ENCODE measurements at regions of chr19 and their contacts with region 1.

Region 1: GRCh38 chr19:50329146-50329925 is at the start of gene KCNC3:
- DNase-seq: peak; percentile 98 to 99
- ATAC-seq: peak; percentile 79 to 91 (median 86)
- H3K4me3 ChIP-seq: peak within 1 kb of the TSS; percentile 18 to 53 (median 48)
- H3K27ac ChIP-seq: peak within 1 kb of the TSS in 9 of 10 donors; percentile 16 to 83 (median 72)
- H3K4me1 ChIP-seq: peaks cover 5 to 62% (median 27%) of the 10 kb centered on the region in 9 donors
- H3K27me3 ChIP-seq: peaks cover 0 to 86% (median 64%) of the 10 kb centered on the region in 7 donors
- CTCF ChIP-seq: no peak
- total RNA-seq, gene KCNC3: 1.4 to 4.0 (median 2.4) TPM

Region 2: GRCh38 chr19:50167314-50167721 is 162.0 kb before region 1 on chr19:
- intact Hi-C with region 1: loop called in 1 of 10 experiments (anchors 5 kb)
- DNase-seq: no peak
- ATAC-seq: no peak
- H3K4me3 ChIP-seq: no peak overlapping the region
- H3K27ac ChIP-seq: no peak overlapping the region
- H3K4me1 ChIP-seq: peaks cover 0 to 4% (median 0%) of the 10 kb centered on the region in 9 donors
- H3K27me3 ChIP-seq: peaks cover 0 to 42% (median 15%) of the 10 kb centered on the region in 7 donors
- CTCF ChIP-seq: no peak

Region 3: GRCh38 chr19:50230379-50231351 is 98.7 kb before region 1 on chr19:
- intact Hi-C with region 1: no loop called
- DNase-seq: peak in 1 of 2 donors; percentile 37
- ATAC-seq: peak in 2 of 8 donors; percentile 29 to 57
- H3K4me3 ChIP-seq: no peak overlapping the region
- H3K27ac ChIP-seq: peak overlapping the region in 5 of 10 donors; percentile 6 to 68 (median 58)
- H3K4me1 ChIP-seq: peaks cover 0 to 23% (median 8%) of the 10 kb centered on the region in 9 donors
- H3K27me3 ChIP-seq: no peaks in the 10 kb centered on the region
- CTCF ChIP-seq: no peak